ENCODE measurements at regions of chr10 and their contacts with region 1.

Region 1: DNA sequence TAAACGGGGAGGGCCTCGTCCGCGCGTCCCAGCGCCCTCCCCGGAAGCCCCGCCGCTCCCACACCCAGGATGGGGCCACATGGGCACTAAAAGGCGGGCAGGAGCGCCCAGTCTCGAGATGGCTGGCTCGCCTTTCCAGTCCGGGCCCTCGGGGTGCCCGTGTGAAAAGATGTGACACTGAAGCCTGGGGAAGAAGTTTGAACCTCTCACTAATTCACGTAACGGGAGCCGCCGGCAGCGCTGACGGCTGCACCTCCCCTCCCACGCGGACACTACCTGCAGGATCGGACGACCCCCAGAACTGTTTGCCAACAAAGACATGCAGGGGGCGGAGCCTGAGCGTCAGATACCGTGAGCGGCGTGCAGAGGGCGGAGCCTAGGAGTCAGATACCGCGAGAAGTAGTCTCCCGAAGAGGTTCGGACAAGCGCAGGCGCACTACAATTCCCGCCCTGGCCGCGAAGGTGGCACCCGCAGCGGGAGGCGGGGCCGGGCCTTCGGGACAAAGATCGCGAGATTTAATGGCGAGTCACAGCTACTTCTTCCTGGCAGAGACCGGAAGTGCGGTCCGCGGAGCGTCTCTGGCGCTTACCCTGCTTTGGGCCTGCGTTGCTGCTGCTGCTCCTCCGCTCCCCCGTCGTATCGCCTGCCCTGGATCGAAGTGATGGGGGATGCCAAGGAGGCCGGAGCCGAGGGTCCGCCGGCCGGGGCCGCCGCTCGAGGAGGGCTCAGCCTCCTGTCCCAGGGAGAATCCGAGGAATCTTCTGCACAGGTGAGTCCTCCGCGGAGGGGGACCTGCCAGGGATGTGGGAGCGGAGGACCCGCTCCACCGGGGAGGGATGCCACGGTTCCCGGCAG is at the start of gene EDRF1:
- DNase-seq: peak; percentile 97
- ATAC-seq: peak; percentile 96
- H3K4me3 Mint-ChIP-seq: peak within 1 kb of the TSS; percentile 99
- H3K27ac Mint-ChIP-seq: peak within 1 kb of the TSS; percentile 96
- H3K4me1 Mint-ChIP-seq: peaks cover 29% of the 10 kb centered on the region
- H3K27me3 Mint-ChIP-seq: no peaks in the 10 kb centered on the region
- CTCF ChIP-seq: no peak
- total RNA-seq, gene EDRF1: 41.6 and 52.7 TPM in 2 replicates

Region 2: DNA sequence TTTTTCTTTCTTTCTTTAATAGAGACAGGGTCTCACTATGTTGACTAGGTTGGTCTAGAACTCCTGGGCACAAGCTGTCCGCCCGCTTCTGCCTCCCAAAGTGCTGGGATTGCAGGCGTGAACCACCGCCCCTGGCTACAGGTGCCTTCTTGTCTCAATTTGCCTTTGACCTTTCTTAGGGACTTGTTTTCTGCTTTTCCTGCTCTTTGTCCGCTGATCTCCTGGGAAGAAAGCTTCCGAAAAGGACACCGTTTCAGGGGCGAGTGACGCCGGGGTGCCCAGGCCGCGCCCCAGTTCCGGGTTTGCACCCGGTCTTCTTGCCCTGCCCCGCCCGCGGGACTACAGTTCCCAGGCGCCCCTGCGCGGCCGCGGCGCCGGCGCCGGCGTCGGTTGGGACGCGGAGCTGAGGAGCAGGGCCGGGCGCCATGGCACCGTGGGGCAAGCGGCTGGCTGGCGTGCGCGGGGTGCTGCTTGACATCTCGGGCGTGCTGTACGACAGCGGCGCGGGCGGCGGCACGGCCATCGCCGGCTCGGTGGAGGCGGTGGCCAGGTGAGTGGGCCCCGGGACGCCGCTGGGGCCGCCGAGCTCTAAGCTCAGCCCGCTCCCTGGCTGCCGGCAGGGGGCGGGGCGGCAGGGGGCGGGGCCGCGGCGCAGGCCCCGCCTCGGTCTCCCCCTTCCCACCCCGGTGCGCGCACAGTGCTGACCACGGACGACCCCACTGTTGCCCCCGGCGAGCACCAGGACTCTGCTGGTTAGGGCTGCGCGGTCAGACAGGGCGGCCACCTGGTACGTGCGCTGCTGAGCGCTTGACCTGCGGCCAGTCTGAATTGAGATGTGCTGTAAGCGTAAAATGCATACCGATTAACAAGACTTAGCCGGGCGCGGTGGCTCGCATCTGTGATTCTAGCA is 1257.7 kb before region 1 on chr10 and contains the start of gene LHPP:
- CTCF ChIA-PET with region 1: no interaction called
- POLR2A ChIA-PET with region 1: interaction called, 4 read pairs
- intact Hi-C with region 1: loop called (anchors 10 kb)
- DNase-seq: peak; percentile 91
- ATAC-seq: peak; percentile 92
- H3K4me3 Mint-ChIP-seq: peak within 1 kb of the TSS; percentile 92
- H3K27ac Mint-ChIP-seq: peak within 1 kb of the TSS; percentile 95
- H3K4me1 Mint-ChIP-seq: peaks cover 32% of the 10 kb centered on the region
- H3K27me3 Mint-ChIP-seq: peaks cover 4% of the 10 kb centered on the region
- CTCF ChIP-seq: no peak
- total RNA-seq, gene LHPP: 21.0 and 22.9 TPM in 2 replicates

Region 3: DNA sequence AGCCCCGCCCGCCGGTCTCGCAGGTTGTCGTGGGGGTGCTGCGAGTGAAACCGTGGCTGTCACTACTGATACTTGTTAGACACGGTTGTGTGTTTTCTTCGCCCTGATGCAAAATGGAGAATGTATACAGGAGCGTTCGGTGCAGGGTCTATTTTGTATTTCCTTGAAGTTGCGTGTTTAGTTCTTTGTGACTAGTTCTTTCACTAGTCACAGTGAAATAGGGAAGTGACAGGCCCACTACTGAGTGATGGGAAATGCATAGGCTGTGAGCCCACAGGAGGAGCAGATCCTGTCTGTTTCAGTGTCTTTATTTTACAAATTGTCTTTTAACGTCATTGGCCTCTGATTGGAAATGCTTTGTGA is 917.1 kb before region 1 on chr10:
- CTCF ChIA-PET with region 1: no interaction called
- POLR2A ChIA-PET with region 1: no interaction called
- intact Hi-C with region 1: loop called (anchors 1 kb)
- DNase-seq: no peak
- ATAC-seq: peak; percentile 61
- H3K4me3 Mint-ChIP-seq: peak overlapping the region; percentile 92
- H3K27ac Mint-ChIP-seq: peak overlapping the region; percentile 93
- H3K4me1 Mint-ChIP-seq: peaks cover 18% of the 10 kb centered on the region
- H3K27me3 Mint-ChIP-seq: peaks cover 2% of the 10 kb centered on the region
- CTCF ChIP-seq: no peak

Region 4: DNA sequence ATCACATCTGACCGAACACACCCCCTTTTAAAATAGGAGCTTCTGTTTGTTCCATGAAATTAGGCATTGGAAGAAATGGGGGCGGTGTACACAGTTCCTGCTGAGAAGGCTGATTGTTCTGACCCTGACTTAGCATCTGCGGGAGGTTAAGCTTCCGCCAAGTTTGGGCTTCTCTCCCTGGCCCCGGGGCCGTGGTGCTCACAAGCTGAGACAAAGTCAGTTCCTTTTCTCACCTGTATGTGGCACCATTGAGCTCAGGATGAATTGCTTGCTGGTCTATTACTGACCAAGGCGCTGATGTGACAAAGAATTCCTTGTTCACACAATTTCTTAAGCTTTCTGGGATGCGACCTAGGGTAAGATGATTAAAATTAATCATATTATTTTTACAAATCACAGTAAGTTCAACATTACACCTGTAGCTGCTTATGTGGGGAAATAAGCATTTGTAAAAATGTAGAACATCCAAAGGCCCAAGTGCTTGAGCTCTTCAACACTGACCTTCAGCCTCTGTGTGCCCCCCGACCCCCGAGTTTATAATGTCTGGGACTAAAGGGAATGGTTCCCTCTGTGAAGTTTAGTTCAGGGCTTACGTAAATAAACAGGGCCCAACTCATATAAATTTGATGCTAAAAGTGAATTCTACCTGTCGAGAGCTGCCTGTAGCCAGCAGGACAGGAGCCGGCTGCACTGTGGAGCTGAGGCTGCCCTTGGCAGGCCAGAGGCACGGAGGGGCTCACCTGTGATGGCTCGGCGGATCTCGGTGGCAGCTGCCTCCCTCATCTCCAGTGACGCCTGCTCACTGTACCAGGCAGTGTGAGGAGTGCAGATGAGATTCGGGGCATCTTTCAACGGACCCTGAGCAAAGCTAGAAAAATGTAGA is 726.7 kb before region 1 on chr10:
- CTCF ChIA-PET with region 1: no interaction called
- POLR2A ChIA-PET with region 1: no interaction called
- intact Hi-C with region 1: loop called (anchors 1 kb)
- DNase-seq: no peak
- ATAC-seq: peak; percentile 66
- H3K4me3 Mint-ChIP-seq: no peak overlapping the region
- H3K27ac Mint-ChIP-seq: no peak overlapping the region
- H3K4me1 Mint-ChIP-seq: peaks cover 14% of the 10 kb centered on the region
- H3K27me3 Mint-ChIP-seq: no peaks in the 10 kb centered on the region
- CTCF ChIP-seq: no peak

Region 5: GRCh38 chr10:125048101-125048864 is 671.1 kb before region 1 on chr10:
- CTCF ChIA-PET with region 1: no interaction called
- POLR2A ChIA-PET with region 1: no interaction called
- intact Hi-C with region 1: loop called (anchors 5 kb)
- DNase-seq: peak; percentile 52
- ATAC-seq: peak; percentile 83
- H3K4me3 Mint-ChIP-seq: no peak overlapping the region
- H3K27ac Mint-ChIP-seq: no peak overlapping the region
- H3K4me1 Mint-ChIP-seq: no peaks in the 10 kb centered on the region
- H3K27me3 Mint-ChIP-seq: peaks cover 55% of the 10 kb centered on the region
- CTCF ChIP-seq: peak; percentile 69

Region 6: GRCh38 chr10:125060826-125061556 is 658.4 kb before region 1 on chr10:
- CTCF ChIA-PET with region 1: no interaction called
- POLR2A ChIA-PET with region 1: no interaction called
- intact Hi-C with region 1: loop called (anchors 5 kb)
- DNase-seq: no peak
- ATAC-seq: no peak
- H3K4me3 Mint-ChIP-seq: no peak overlapping the region
- H3K27ac Mint-ChIP-seq: no peak overlapping the region
- H3K4me1 Mint-ChIP-seq: peaks cover 45% of the 10 kb centered on the region
- H3K27me3 Mint-ChIP-seq: peaks cover 48% of the 10 kb centered on the region
- CTCF ChIP-seq: no peak

Region 7: DNA sequence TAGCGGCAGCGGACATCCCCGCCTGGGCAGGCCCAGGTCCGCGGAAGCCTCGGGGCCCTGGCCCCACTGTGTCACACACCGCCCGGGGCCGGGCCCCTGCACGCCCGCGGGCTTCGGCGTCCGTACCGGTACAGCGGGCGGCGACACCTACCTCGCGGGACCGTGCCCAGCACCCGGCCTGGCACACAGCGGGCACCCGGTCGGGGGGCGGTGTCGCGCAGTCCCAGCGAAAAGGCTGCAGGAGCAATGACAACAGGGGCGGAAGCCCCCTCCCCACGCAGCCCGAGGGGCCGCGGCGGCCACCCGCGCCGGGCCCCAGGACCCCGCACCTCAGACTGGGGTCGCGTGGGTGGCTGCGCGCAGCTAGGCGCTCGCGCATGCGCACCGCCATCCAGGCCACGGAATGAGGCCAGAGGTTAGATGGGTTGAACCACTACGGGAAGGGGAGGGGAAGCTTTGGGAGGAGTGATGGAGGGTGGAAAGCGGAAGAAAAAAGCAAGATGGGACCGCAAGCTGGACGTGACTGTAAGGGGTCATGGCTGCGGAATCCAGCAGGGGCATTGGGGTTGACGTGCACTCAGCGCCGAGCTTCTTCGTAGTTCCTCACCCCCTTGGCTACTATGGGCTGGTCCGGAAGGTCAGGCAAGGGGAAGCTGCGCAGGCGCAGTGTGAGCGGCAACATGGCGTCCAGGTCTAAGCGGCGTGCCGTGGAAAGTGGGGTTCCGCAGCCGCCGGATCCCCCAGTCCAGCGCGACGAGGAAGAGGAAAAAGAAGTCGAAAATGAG is 103.7 kb after region 1 on chr10 and contains the starts of genes BCCIP and UROS:
- CTCF ChIA-PET with region 1: no interaction called
- POLR2A ChIA-PET with region 1: interaction called, 16 read pairs
- intact Hi-C with region 1: loop called (anchors 1 kb)
- DNase-seq: peak; percentile 86
- ATAC-seq: peak; percentile 87
- H3K4me3 Mint-ChIP-seq: peak within 1 kb of the TSS; percentile 78
- H3K27ac Mint-ChIP-seq: peak within 1 kb of the TSS; percentile 46
- H3K4me1 Mint-ChIP-seq: peaks cover 36% of the 10 kb centered on the region
- H3K27me3 Mint-ChIP-seq: no peaks in the 10 kb centered on the region
- CTCF ChIP-seq: no peak
- total RNA-seq, gene BCCIP: 63.6 and 64.9 TPM in 2 replicates
- total RNA-seq, gene UROS: 34.1 and 34.9 TPM in 2 replicates